GM12878 (cell line): ENCODE measurements at regions of chr20 and their contacts with region 1.

Region 1: GRCh38 chr20:22106308-22106938 is 401.0 kb downstream of the PAX1 start:
- DNase-seq: no peak
- ATAC-seq: peak; percentile 52; the same call in 2 of the 3 replicates
- H3K4me3 ChIP-seq: no peak overlapping the region
- H3K27ac ChIP-seq: no peak overlapping the region
- H3K4me1 ChIP-seq: no peaks in the 10 kb centered on the region
- H3K27me3 ChIP-seq: no peaks in the 10 kb centered on the region
- CTCF ChIP-seq: peak; percentile 17 to 31 (median 28); a peak in 4 of 6 replicates
- EP300 ChIP-seq: no peak
- POLR2A ChIP-seq: no peak
- RAD21 ChIP-seq: peak; percentile 40; the same call in 1 of the 2 replicates

Region 2: GRCh38 chr20:21719592-21720214 is 386.7 kb before region 1 on chr20:
- CTCF ChIA-PET with region 1: interaction called, 16 read pairs
- POLR2A ChIA-PET with region 1: no interaction called
- RAD21 ChIA-PET with region 1: no interaction called
- SMC1A ChIA-PET with region 1: interaction called, 4 read pairs
- in situ Hi-C with region 1: no loop called
- intact Hi-C with region 1: loop called (anchors 5 kb)
- DNase-seq: peak; percentile 12
- ATAC-seq: peak; percentile 71
- H3K4me3 ChIP-seq: no peak overlapping the region
- H3K27ac ChIP-seq: no peak overlapping the region
- H3K4me1 ChIP-seq: no peaks in the 10 kb centered on the region
- H3K27me3 ChIP-seq: peaks cover 0 to 4% of the 10 kb centered on the region in 2 experiments; a peak in 1 of 4 replicates
- CTCF ChIP-seq: peak; percentile 59 to 70 (median 66)
- EP300 ChIP-seq: no peak
- POLR2A ChIP-seq: no peak
- RAD21 ChIP-seq: peak; percentile 47

Region 3: GRCh38 chr20:21808863-21809664 is 297.4 kb before region 1 on chr20:
- CTCF ChIA-PET with region 1: interaction called, 5 read pairs
- POLR2A ChIA-PET with region 1: no interaction called
- RAD21 ChIA-PET with region 1: no interaction called
- SMC1A ChIA-PET with region 1: no interaction called
- in situ Hi-C with region 1: no loop called
- intact Hi-C with region 1: loop called (anchors 1 kb)
- DNase-seq: no peak
- ATAC-seq: peak; percentile 74
- H3K4me3 ChIP-seq: no peak overlapping the region
- H3K27ac ChIP-seq: no peak overlapping the region
- H3K4me1 ChIP-seq: no peaks in the 10 kb centered on the region
- H3K27me3 ChIP-seq: no peaks in the 10 kb centered on the region
- CTCF ChIP-seq: peak; percentile 51 to 73 (median 59)
- EP300 ChIP-seq: no peak
- POLR2A ChIP-seq: no peak
- RAD21 ChIP-seq: peak; percentile 26; the same call in 1 of the 2 replicates

Region 4: GRCh38 chr20:22127587-22127986 is 21.2 kb after region 1 on chr20:
- CTCF ChIA-PET with region 1: no interaction called
- POLR2A ChIA-PET with region 1: no interaction called
- RAD21 ChIA-PET with region 1: no interaction called
- SMC1A ChIA-PET with region 1: no interaction called
- in situ Hi-C with region 1: no loop called
- intact Hi-C with region 1: no loop called
- DNase-seq: no peak
- ATAC-seq: no peak
- H3K4me3 ChIP-seq: no peak overlapping the region
- H3K27ac ChIP-seq: no peak overlapping the region
- H3K4me1 ChIP-seq: no peaks in the 10 kb centered on the region
- H3K27me3 ChIP-seq: no peaks in the 10 kb centered on the region
- CTCF ChIP-seq: no peak
- EP300 ChIP-seq: no peak
- POLR2A ChIP-seq: no peak
- RAD21 ChIP-seq: no peak

Region 5: DNA sequence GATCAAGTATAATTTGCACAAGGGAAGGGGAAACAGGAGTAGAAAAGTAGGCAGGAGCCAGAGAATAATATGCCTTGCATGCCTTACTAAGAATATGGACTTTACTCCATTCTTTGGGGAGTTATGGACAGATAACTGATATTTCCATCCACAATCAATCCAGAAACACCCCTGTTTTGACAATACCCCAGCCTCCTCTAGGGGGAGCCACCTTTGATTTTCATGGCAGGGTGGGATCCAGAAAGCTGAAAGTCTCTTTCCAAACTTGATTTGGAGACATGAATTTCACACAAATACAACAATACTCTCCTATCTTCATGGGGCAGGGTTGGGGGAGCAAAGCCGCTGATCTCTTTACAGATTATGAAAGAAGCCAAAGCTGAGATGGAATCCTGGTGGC is 73.8 kb after region 1 on chr20:
- CTCF ChIA-PET with region 1: no interaction called
- POLR2A ChIA-PET with region 1: no interaction called
- RAD21 ChIA-PET with region 1: no interaction called
- SMC1A ChIA-PET with region 1: no interaction called
- in situ Hi-C with region 1: no loop called
- intact Hi-C with region 1: loop called (anchors 10 kb)
- DNase-seq: no peak
- ATAC-seq: no peak
- H3K4me3 ChIP-seq: no peak overlapping the region
- H3K27ac ChIP-seq: no peak overlapping the region
- H3K4me1 ChIP-seq: no peaks in the 10 kb centered on the region
- H3K27me3 ChIP-seq: no peaks in the 10 kb centered on the region
- CTCF ChIP-seq: peak; percentile 9 to 34 (median 33); a peak in 2 of 6 replicates
- EP300 ChIP-seq: no peak
- POLR2A ChIP-seq: no peak
- RAD21 ChIP-seq: no peak

Region 6: DNA sequence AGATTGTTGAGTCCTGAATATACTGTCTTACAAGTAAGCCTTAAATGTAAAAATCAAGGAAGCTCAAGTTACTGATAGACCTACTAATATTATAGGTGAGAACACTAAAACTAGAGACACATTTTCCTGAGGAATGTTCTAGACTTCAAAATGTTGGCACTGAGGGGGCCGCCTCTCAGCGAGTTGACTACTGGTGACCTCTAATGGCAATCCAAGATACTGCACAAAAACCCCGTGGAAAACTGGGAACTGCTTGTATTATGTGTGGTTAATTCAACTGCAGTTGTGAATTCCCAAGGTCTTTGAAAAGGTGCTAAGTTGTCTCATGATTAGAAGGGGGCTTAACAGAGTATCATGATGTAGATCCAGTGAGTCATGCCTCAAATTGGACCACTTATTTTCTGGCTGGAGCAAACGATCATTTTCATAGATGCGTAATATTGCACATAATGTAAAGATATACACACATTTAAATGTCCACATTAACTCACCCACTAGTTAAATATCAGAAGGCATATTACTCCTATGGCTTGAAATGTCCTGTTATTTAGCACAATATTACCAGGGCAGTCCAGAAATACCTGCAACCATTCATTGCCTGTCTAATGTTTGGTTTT is 141.7 kb after region 1 on chr20:
- CTCF ChIA-PET with region 1: no interaction called
- POLR2A ChIA-PET with region 1: no interaction called
- RAD21 ChIA-PET with region 1: no interaction called
- SMC1A ChIA-PET with region 1: no interaction called
- in situ Hi-C with region 1: no loop called
- intact Hi-C with region 1: loop called (anchors 2 kb)
- DNase-seq: no peak
- ATAC-seq: peak; percentile 52
- H3K4me3 ChIP-seq: no peak overlapping the region
- H3K27ac ChIP-seq: no peak overlapping the region
- H3K4me1 ChIP-seq: no peaks in the 10 kb centered on the region
- H3K27me3 ChIP-seq: no peaks in the 10 kb centered on the region
- CTCF ChIP-seq: peak; percentile 59 to 70 (median 59); a peak in 5 of 6 replicates
- EP300 ChIP-seq: no peak
- POLR2A ChIP-seq: no peak
- RAD21 ChIP-seq: peak; percentile 64

Region 7: GRCh38 chr20:22312744-22313346 is 206.4 kb after region 1 on chr20:
- CTCF ChIA-PET with region 1: no interaction called
- POLR2A ChIA-PET with region 1: no interaction called
- RAD21 ChIA-PET with region 1: no interaction called
- SMC1A ChIA-PET with region 1: no interaction called
- in situ Hi-C with region 1: no loop called
- intact Hi-C with region 1: loop called (anchors 10 kb)
- DNase-seq: no peak
- ATAC-seq: peak; percentile 50; the same call in 2 of the 3 replicates
- H3K4me3 ChIP-seq: no peak overlapping the region
- H3K27ac ChIP-seq: no peak overlapping the region
- H3K4me1 ChIP-seq: no peaks in the 10 kb centered on the region
- H3K27me3 ChIP-seq: no peaks in the 10 kb centered on the region
- CTCF ChIP-seq: peak; percentile 47 to 62 (median 49); a peak in 5 of 6 replicates
- EP300 ChIP-seq: no peak
- POLR2A ChIP-seq: no peak
- RAD21 ChIP-seq: peak; percentile 49